ENCODE measurements at regions of chr15 and their contacts with region 1.

Region 1: DNA sequence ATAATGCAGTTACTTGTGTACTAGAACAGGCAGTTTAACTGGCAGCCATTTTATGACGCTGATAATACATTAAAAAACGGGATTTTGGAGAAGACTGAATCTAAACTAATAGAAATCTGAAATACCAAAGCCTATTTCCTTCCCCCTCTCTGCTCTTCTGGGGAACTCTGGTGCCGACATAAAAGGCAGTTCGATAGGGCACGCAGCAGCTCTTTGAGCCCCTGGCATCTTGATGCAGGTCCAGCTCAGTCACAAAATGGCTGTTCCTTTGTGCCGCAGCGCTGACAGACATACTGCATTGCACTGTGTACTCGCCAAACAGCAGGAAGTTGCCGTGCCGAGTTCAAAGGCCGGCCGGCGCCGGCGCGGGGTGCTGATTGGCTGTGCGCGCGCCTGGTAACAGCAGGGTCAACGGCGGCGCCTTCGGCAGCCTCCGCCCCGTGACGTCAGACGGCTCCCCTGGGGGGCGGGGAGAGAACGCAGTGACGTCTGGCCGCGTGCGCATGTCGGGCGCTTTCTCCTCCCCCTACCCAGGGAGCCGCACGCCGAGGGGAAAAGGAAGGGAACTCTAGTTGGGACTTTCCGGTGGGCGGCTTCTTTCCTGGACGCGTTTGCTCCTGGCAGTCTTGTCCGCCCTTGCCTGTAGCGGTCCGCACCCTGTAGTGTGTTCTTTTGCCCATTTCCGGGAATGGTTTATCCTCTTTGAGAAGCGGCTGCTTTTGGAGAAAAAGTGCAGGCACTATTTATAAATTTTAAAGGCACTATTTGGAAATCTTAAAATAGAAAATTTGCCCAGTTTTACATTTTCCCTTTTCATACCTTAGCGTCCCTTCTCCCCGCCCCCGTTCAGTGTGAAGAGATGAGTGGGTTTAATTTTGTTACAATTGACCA is 4.1 kb downstream of the CHD2 start:
- DNase-seq: peak; percentile 94
- ATAC-seq: peak; percentile 78
- H3K4me3 ChIP-seq: peak overlapping the region; percentile 95
- H3K27ac ChIP-seq: peak overlapping the region; percentile 98
- H3K4me1 ChIP-seq: peaks cover 13% of the 10 kb centered on the region
- H3K27me3 ChIP-seq: no peaks in the 10 kb centered on the region
- CTCF ChIP-seq: no peak
- EP300 ChIP-seq: peak in 1 of 2 experiments; percentile 49; a peak in 1 of 4 replicates
- POLR2A ChIP-seq: peak; percentile 93
- RAD21 ChIP-seq: no peak

Region 2: DNA sequence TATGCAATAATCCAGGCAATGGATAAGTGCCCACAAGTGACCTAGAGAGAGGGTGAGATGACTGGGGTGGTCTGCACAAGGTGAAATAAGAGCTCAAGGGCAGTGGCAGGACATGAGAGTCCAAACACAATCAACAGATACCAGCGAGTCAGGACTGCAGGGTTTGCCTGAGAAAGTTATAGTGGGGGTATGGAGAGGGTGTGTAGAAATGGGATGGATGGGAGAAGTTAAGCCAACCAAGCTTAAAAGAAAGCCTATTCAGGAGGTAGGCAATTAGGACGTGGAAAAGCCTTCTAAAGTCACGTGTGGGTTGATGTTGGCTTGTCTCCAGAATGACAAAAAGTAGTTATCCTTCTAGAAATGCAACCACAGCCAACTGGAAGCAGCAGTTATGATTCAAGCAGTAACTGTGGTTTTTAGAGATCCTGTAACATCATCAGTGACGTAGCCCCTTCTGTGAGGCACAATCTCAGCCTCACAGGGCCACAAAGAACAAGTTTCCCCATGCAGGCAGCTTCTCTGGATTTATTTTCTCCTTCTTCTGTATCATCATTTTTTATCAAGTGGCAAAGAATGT is 304.7 kb before region 1 on chr15:
- CTCF ChIA-PET with region 1: no interaction called
- POLR2A ChIA-PET with region 1: no interaction called
- RAD21 ChIA-PET with region 1: no interaction called
- SMC1A ChIA-PET with region 1: no interaction called
- in situ Hi-C with region 1: no loop called
- intact Hi-C with region 1: no loop called
- DNase-seq: no peak
- ATAC-seq: no peak
- H3K4me3 ChIP-seq: no peak overlapping the region
- H3K27ac ChIP-seq: no peak overlapping the region
- H3K4me1 ChIP-seq: no peaks in the 10 kb centered on the region
- H3K27me3 ChIP-seq: no peaks in the 10 kb centered on the region; a peak in 1 of 4 replicates
- CTCF ChIP-seq: no peak
- EP300 ChIP-seq: no peak
- POLR2A ChIP-seq: no peak
- RAD21 ChIP-seq: no peak

Region 3: DNA sequence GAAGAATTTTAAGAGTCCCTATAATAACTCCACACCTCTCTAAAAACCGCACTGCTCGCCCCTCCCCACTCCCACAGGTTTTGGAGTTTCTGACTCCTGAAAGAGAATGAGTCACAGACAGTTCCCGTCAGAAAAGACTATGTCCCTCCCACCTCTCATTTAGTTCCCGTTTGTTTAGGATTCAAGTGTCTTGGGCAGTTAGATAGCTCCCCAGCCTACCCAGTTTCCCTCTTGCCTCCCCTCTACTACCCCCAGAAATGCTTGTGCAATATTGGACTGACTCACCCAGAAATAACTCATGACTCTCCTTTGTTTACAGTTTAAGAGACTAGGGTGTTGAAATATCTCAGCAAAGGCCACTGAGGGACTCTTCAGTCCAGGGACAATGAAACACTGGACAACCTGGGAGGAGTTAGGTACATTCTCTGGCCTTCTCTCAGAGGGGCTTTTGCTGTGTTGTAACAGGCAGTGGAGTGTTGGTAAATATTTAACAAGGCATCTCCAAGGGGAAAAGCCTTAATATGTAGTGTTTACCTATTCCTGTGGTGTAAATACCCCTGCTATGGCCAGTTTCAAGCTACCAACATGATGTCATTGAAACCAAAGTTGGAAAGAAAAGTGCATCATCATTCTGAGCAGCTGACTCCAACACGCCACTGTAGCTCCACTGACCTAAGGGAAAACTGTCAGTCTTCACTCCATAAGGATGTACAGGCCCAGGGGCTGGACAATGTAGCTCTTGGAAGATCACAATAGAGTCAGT is 100.2 kb before region 1 on chr15:
- CTCF ChIA-PET with region 1: interaction called, 36 read pairs
- POLR2A ChIA-PET with region 1: interaction called, 157 read pairs
- RAD21 ChIA-PET with region 1: interaction called, 91 read pairs
- SMC1A ChIA-PET with region 1: interaction called, 135 read pairs
- in situ Hi-C with region 1: no loop called
- intact Hi-C with region 1: loop called (anchors 1 kb)
- DNase-seq: peak; percentile 65
- ATAC-seq: peak; percentile 64
- H3K4me3 ChIP-seq: no peak overlapping the region
- H3K27ac ChIP-seq: peak overlapping the region; percentile 48
- H3K4me1 ChIP-seq: peaks cover 13% of the 10 kb centered on the region
- H3K27me3 ChIP-seq: no peaks in the 10 kb centered on the region
- CTCF ChIP-seq: no peak
- EP300 ChIP-seq: peak; percentile 72 to 81; a peak in 3 of 4 replicates
- POLR2A ChIP-seq: no peak
- RAD21 ChIP-seq: no peak

Region 4: DNA sequence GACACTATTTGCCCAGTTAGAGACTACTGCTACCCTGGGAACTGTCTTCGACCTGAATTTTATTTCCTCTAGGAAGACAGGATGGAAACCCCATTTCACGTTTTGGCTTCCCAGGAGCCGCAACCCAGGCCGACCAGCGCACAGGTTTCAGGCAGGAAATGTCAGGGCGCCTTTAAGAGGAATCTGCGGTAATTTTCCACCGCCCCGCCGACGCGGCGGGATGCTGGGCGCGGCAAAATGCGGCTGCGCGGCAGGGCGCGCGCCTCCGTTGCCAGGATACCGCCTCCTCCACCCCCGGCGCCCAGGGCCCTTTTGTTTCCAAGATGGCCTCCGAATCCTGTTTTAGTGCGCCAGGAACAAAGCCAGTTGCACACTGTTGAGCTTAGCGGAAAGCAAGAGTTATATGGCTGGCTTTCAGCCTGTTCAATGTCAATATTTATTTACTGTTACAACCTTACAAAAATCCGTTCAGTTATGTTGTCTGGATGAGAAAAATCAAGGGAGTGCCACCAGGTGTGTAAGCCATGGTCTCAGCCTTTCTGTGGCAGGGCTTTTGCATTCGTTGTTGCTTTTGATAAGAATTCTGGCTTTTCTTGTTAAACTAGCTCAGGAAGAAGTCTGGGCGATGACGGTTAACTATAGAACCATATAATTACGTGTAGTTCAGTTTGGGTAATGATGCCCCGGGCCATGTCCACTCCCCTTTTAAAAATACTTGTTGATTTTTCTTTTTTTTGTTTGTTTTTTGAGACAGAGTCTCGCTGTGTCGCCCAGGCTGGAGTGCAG is 83.8 kb before region 1 on chr15:
- CTCF ChIA-PET with region 1: interaction called, 3 read pairs
- POLR2A ChIA-PET with region 1: interaction called, 13 read pairs
- RAD21 ChIA-PET with region 1: interaction called, 5 read pairs
- SMC1A ChIA-PET with region 1: interaction called, 6 read pairs
- in situ Hi-C with region 1: no loop called
- intact Hi-C with region 1: no loop called
- DNase-seq: no peak
- ATAC-seq: peak; percentile 94
- H3K4me3 ChIP-seq: peak overlapping the region; percentile 64
- H3K27ac ChIP-seq: peak overlapping the region; percentile 85
- H3K4me1 ChIP-seq: peaks cover 28% of the 10 kb centered on the region
- H3K27me3 ChIP-seq: no peaks in the 10 kb centered on the region
- CTCF ChIP-seq: no peak
- EP300 ChIP-seq: no peak
- POLR2A ChIP-seq: peak; percentile 59; the same call in 1 of the 2 replicates
- RAD21 ChIP-seq: no peak

Region 5: GRCh38 chr15:92889390-92890107 is 14.6 kb before region 1 on chr15:
- CTCF ChIA-PET with region 1: interaction called, 15 read pairs
- POLR2A ChIA-PET with region 1: interaction called, 207 read pairs
- RAD21 ChIA-PET with region 1: interaction called, 100 read pairs
- SMC1A ChIA-PET with region 1: interaction called, 252 read pairs
- in situ Hi-C with region 1: no loop called
- intact Hi-C with region 1: loop called (anchors 2 kb)
- DNase-seq: no peak
- ATAC-seq: peak; percentile 30
- H3K4me3 ChIP-seq: peak overlapping the region; percentile 13; the same call in 1 of the 2 replicates
- H3K27ac ChIP-seq: no peak overlapping the region
- H3K4me1 ChIP-seq: peaks cover 3% of the 10 kb centered on the region; the same call in 1 of the 2 replicates
- H3K27me3 ChIP-seq: no peaks in the 10 kb centered on the region
- CTCF ChIP-seq: no peak
- EP300 ChIP-seq: no peak
- POLR2A ChIP-seq: no peak
- RAD21 ChIP-seq: no peak